ENCODE measurements at regions of chrX and their contacts with region 1.

Region 1: DNA sequence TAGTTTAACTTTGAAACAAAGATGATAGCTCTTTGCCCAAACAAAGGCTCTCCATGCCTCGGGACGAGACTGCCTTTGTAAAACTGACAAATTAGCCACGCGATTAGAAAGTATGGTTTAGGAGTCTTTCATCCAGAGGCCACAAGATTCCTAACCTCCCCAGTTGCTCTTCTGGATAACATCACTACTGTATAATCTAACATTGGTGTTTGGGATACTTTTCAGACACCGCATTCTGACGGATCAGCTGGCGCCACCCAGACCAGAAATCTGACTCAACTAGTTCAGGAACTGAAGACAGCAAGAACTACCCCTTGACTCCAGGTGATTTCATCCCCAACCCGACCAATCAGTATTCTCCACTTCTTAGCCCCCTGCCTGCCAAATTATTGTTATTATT is 98.1 kb upstream of the TEX13D start:
- DNase-seq: peak; percentile 30 to 32
- H3K4me3 ChIP-seq: no peak overlapping the region
- H3K4me3 Mint-ChIP-seq: peak overlapping the region; percentile 49
- H3K27ac Mint-ChIP-seq: peak overlapping the region; percentile 23
- H3K4me1 ChIP-seq: peaks cover 6% of the 10 kb centered on the region; the same call in 1 of the 2 replicates
- H3K4me1 Mint-ChIP-seq: no peaks in the 10 kb centered on the region
- H3K27me3 ChIP-seq: no peaks in the 10 kb centered on the region
- H3K27me3 Mint-ChIP-seq: no peaks in the 10 kb centered on the region
- CTCF ChIP-seq: no peak

Region 2: DNA sequence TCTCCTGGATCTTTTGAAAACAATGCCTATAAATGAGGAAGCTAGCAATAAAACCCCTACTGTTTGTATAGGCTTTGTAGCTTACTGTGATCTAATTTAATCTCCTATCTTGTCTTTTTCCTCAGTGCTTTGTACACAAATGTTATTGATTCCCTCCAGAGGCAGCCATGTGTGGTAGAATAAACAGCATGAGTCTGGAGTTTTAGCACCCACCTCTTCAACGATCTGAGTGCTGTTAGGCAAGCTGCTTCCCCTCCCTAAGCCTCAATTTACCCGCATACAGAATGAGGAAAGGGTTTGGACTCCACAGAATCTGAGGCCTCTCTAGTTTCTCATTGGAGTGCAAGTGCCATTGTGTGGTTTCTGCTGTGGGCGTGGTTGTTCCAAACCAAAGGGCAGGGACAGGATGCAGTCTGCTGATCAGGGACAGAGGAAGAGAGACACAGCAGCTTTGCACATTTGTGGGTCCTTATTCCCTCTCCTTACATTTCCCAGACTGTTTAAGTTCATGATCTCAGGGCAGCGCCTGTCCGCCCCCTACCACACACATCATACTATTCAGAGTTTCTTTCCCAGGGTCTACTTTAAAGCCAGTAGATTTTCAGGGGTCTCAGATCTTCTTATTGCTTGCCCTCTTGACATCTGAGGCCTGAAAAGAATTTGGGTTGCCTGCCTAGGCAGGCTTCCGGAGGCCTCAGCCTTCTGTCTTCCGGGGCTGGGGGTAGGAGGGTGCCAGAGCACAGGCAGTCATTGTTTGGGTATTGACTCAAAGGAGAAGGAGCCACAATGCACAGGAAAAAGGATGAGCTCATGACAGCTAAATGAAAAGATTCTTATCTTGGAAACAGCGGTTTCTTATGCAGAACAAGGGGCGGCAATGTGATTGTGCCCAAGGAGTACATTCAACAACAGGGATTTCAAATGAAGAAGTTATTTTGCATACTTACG is 16.8 kb before region 1 on chrX:
- CTCF ChIA-PET with region 1: no interaction called
- POLR2A ChIA-PET with region 1: no interaction called
- intact Hi-C with region 1: loop called (anchors 2 kb)
- DNase-seq: no peak
- H3K4me3 ChIP-seq: no peak overlapping the region
- H3K4me3 Mint-ChIP-seq: no peak overlapping the region
- H3K27ac Mint-ChIP-seq: peak overlapping the region; percentile 19
- H3K4me1 ChIP-seq: no peaks in the 10 kb centered on the region
- H3K4me1 Mint-ChIP-seq: peaks cover 33% of the 10 kb centered on the region
- H3K27me3 ChIP-seq: no peaks in the 10 kb centered on the region
- H3K27me3 Mint-ChIP-seq: no peaks in the 10 kb centered on the region
- CTCF ChIP-seq: no peak